ENCODE measurements at regions of chr14 and their contacts with region 1.

Region 1: GRCh38 chr14:50003213-50004031 is 110.5 kb downstream of the ARF6 start:
- DNase-seq: peak; percentile 90
- ATAC-seq: peak; percentile 2
- H3K4me3 Mint-ChIP-seq: peak overlapping the region; percentile 75
- H3K27ac Mint-ChIP-seq: peak overlapping the region; percentile 98
- H3K4me1 Mint-ChIP-seq: peaks cover 56% of the 10 kb centered on the region
- H3K27me3 Mint-ChIP-seq: no peaks in the 10 kb centered on the region

Region 2: DNA sequence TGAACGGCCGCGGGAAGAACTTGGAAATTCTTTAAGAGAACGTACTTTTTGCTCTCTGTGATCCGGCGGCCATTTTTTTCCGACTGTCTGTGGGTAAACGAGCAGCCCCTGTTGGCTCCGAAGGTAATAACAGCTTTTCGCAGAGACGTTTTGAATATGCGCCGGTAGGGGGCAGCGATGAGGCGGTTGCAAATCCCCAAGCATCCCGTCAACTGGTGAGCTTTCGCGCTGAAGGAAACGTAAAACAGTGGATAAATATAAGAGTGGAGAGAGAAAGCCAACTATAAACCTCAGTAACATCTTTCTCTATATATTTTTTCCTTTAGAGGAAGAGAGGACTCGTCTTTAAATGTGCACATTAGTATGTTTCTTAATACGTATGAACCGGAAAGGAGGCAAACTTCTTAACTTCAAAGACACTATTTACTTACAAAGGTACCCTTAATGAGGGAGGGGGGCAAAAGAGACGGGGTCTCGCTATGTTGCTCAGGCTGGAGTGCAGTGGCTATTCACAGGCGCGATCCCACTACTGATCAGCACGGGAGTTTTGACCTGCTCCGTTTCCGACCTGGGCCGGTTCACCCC is 141.2 kb before region 1 on chr14:
- CTCF ChIA-PET with region 1: interaction called, 43 read pairs
- POLR2A ChIA-PET with region 1: interaction called, 20 read pairs
- intact Hi-C with region 1: loop called (anchors 1 kb)
- DNase-seq: peak; percentile 92
- ATAC-seq: peak; percentile 13
- H3K4me3 Mint-ChIP-seq: no peak overlapping the region
- H3K27ac Mint-ChIP-seq: no peak overlapping the region
- H3K4me1 Mint-ChIP-seq: peaks cover 20% of the 10 kb centered on the region
- H3K27me3 Mint-ChIP-seq: no peaks in the 10 kb centered on the region

Region 3: GRCh38 chr14:49946320-49947141 is 56.9 kb before region 1 on chr14:
- CTCF ChIA-PET with region 1: interaction called, 3 read pairs
- POLR2A ChIA-PET with region 1: no interaction called
- intact Hi-C with region 1: loop called in 1 of 2 experiments (anchors 1 kb)
- DNase-seq: peak; percentile 62
- ATAC-seq: peak; percentile 53
- H3K4me3 Mint-ChIP-seq: peak overlapping the region; percentile 31
- H3K27ac Mint-ChIP-seq: peak overlapping the region; percentile 78
- H3K4me1 Mint-ChIP-seq: peaks cover 71% of the 10 kb centered on the region
- H3K27me3 Mint-ChIP-seq: no peaks in the 10 kb centered on the region

Region 4: GRCh38 chr14:50013559-50014333 is 10.3 kb after region 1 on chr14:
- CTCF ChIA-PET with region 1: interaction called, 11 read pairs
- POLR2A ChIA-PET with region 1: interaction called, 5 read pairs
- intact Hi-C with region 1: loop called in 1 of 2 experiments (anchors 1 kb)
- DNase-seq: no peak
- ATAC-seq: no peak
- H3K4me3 Mint-ChIP-seq: no peak overlapping the region
- H3K27ac Mint-ChIP-seq: peak overlapping the region; percentile 2
- H3K4me1 Mint-ChIP-seq: peaks cover 40% of the 10 kb centered on the region
- H3K27me3 Mint-ChIP-seq: no peaks in the 10 kb centered on the region

Region 5: DNA sequence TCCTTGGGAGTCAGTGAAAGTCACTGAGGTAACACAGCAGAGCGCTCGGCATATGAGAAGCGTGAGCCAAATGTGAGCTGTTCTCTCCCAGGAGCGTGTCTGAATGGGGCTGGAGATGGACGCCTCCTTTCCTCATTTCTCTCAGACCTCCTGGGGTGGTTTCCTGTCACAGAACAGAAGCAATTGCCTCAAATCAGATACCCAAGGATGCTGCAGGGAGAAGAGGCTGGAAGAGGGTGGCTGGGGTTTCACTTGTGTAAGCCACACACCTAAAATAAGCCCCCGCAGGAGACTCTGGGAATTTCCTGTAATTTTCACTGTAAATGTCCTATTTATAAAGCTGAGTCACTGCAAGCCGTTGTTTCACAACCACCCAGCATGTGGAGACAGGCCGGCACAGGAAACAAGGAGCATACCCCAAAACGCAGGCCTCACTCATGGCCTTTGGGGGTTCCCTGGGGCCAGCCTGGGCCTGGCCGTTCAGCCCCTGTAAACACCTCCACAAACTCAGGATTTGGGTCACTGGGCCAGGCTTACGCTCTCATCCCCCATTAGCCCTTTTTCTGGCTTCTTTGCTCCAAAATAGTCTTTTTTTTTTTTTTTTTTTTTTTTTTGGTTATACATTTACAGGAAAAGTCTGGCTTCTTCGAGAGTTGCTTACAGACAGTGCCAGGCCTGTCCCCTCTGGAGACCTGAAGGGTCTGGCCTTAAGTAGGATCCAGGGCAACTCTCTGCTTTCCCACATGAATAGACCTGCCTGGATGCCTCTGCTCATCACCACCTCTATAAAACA is 57.6 kb after region 1 on chr14:
- CTCF ChIA-PET with region 1: interaction called, 7 read pairs
- POLR2A ChIA-PET with region 1: interaction called, 24 read pairs
- intact Hi-C with region 1: loop called (anchors 1 kb)
- DNase-seq: peak; percentile 65
- ATAC-seq: peak; percentile 6
- H3K4me3 Mint-ChIP-seq: peak overlapping the region; percentile 90
- H3K27ac Mint-ChIP-seq: peak overlapping the region; percentile 100
- H3K4me1 Mint-ChIP-seq: peaks cover 84% of the 10 kb centered on the region
- H3K27me3 Mint-ChIP-seq: no peaks in the 10 kb centered on the region

Region 6: DNA sequence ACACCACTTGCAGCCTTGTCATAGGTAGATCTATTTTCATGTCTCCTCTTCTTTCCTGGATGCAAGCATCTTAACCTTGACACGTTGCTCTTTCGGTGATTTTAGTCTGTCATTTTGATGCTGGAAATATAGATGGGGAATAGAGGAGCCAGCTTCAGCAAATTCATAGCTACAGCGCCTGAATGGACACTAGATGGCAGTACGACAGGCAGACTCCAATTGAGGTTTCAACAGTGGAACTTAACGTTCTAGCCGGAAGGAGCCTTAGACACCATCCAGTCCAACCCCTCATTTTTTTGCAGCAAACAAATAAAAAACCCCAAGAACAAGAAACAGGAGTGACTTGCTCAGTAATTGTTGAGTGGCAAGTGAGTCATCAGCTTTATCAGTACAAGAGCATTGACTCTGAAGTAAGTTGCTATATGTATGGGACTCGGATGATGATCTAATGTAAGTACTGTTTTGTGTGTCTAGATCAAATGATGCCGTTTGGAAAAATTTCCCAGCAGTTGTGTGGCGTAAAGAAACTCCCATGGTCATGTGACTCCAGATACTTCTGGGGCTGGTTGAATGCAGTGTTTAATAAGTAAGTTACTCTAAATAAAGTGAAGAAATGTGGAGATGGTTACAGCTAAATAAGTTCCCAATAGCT is 317.7 kb after region 1 on chr14:
- CTCF ChIA-PET with region 1: interaction called, 3 read pairs
- POLR2A ChIA-PET with region 1: no interaction called
- intact Hi-C with region 1: loop called in 1 of 2 experiments (anchors 5 kb)
- DNase-seq: peak; percentile 77
- ATAC-seq: peak; percentile 98
- H3K4me3 Mint-ChIP-seq: no peak overlapping the region
- H3K27ac Mint-ChIP-seq: no peak overlapping the region
- H3K4me1 Mint-ChIP-seq: peaks cover 31% of the 10 kb centered on the region
- H3K27me3 Mint-ChIP-seq: no peaks in the 10 kb centered on the region

Measured in activated CD4-positive, alpha-beta T cell treated with anti-CD3 and anti-CD28 coated beads for 36 hours (primary cell).